Caco-2 (cell line): ENCODE measurements at regions of chr11 and their contacts with region 1.

Region 1: GRCh38 chr11:43130616-43131015 is 181.2 kb upstream of the API5 start:
- DNase-seq: peak; percentile 36 to 46
- H3K4me3 ChIP-seq: no peak overlapping the region
- H3K4me3 Mint-ChIP-seq: no peak overlapping the region
- H3K27ac Mint-ChIP-seq: no peak overlapping the region
- H3K4me1 ChIP-seq: peaks cover 10% of the 10 kb centered on the region
- H3K4me1 Mint-ChIP-seq: peaks cover 5% of the 10 kb centered on the region
- H3K27me3 ChIP-seq: no peaks in the 10 kb centered on the region
- H3K27me3 Mint-ChIP-seq: peaks cover 2% of the 10 kb centered on the region
- CTCF ChIP-seq: peak in 1 of 2 experiments; percentile 12

Region 2: DNA sequence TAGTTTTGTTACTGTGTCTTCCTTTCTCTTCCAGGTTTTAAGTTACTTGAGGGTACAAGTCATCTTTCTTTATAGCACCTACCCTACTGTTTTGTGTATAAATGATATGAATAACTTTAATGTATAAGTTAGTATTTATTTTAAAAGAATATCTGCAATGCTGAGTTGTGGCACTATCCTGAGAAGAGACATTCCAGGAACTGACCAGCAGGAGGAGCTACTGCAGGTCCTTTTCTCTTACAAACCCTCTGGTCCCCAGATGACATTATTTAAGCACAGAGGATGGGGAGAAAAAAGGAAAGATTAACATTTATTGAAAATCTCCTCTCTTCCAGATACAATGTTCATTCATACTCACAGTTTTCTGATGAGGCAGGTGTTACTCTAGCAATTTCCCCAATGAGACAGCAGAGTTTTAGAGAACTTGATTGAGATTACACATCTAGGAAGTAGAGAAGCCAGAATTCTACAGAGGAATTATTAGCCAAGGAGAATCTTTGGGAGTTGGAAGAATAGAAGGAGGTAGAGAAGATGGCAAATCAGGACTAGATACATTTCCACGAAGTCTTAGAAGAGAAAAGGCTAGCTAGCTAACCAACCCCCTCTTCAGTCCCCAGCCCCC is 360.1 kb before region 1 on chr11:
- CTCF ChIA-PET with region 1: interaction called, 13 read pairs
- POLR2A ChIA-PET with region 1: no interaction called
- intact Hi-C with region 1: loop called (anchors 1 kb)
- DNase-seq: peak in 1 of 2 experiments; percentile 31
- H3K4me3 ChIP-seq: no peak overlapping the region
- H3K4me3 Mint-ChIP-seq: no peak overlapping the region
- H3K27ac Mint-ChIP-seq: no peak overlapping the region
- H3K4me1 ChIP-seq: no peaks in the 10 kb centered on the region
- H3K4me1 Mint-ChIP-seq: no peaks in the 10 kb centered on the region
- H3K27me3 ChIP-seq: no peaks in the 10 kb centered on the region
- H3K27me3 Mint-ChIP-seq: peaks cover 6% of the 10 kb centered on the region
- CTCF ChIP-seq: peak; percentile 73 to 80

Region 3: DNA sequence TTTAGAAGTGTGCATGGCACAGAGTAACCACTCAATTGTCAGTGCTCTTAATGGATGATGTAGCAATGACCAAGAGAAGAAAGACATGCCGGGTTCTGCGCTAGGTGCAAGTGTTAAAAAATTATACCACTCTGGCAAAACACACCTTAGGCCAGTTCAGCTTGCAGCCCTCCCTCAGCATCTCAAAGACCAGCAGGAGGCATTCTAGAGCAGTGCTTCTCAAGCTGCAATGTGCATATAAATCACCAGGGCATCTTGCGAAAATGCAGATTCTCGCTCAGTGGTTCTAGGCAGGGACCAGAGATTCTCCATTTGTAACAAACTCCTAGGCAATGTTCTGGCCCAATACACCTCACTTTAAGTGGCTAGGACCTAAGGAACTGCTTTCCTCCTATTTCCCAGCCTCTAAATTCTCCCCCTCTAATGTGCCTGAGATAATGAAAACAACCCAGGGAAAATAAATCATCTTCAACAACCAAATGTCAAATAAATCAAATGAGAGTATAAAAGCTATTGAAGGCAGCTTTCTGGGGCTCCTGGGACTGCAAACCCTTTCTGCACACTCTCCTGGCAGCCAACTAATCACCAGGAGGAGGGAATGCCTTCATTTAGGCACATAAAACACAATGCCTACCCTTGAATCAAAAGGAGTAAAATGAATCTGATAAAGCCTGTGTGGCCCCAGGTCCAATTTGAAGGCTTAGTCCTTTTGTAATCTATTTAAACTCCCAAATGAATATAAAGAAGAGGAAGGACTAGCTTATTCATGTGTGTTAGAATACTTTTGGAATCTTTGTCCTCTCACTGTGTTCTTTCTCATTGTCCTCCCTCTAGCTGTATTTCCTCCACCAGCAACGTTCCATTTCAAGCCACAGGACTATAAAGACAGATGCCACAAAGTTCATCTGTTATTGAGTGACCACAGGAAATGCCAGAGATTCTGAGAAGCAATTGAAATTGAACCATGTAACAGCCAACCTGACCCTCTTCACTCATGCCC is 155.8 kb before region 1 on chr11:
- CTCF ChIA-PET with region 1: interaction called, 3 read pairs
- POLR2A ChIA-PET with region 1: no interaction called
- intact Hi-C with region 1: loop called (anchors 1 kb)
- DNase-seq: peak in 1 of 2 experiments; percentile 7
- H3K4me3 ChIP-seq: no peak overlapping the region
- H3K4me3 Mint-ChIP-seq: no peak overlapping the region
- H3K27ac Mint-ChIP-seq: no peak overlapping the region
- H3K4me1 ChIP-seq: no peaks in the 10 kb centered on the region
- H3K4me1 Mint-ChIP-seq: no peaks in the 10 kb centered on the region
- H3K27me3 ChIP-seq: no peaks in the 10 kb centered on the region
- H3K27me3 Mint-ChIP-seq: peaks cover 4% of the 10 kb centered on the region
- CTCF ChIP-seq: peak in 1 of 2 experiments; percentile 6

Region 4: DNA sequence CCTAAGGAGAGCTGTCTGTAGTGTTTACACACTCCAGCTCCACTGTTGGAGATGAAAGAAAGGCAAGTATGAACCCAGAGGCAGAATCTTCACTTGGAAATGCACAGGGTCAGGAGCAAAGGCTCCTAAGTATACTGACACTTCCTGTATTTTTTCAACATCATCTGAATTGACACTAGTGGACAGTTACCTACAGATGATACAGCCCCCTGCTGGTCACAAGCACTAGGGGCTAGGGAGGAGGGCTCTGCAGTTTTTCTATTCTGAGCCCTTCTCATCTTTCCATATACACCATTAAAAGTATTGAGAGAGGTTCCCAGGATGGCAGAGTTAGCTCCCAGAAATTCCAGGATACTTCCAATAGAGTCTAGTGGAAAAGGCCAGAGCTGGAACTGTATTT is 109.2 kb before region 1 on chr11:
- CTCF ChIA-PET with region 1: no interaction called
- POLR2A ChIA-PET with region 1: no interaction called
- intact Hi-C with region 1: loop called (anchors 1 kb)
- DNase-seq: peak; percentile 39 to 42
- H3K4me3 ChIP-seq: no peak overlapping the region
- H3K4me3 Mint-ChIP-seq: no peak overlapping the region
- H3K27ac Mint-ChIP-seq: no peak overlapping the region
- H3K4me1 ChIP-seq: no peaks in the 10 kb centered on the region
- H3K4me1 Mint-ChIP-seq: no peaks in the 10 kb centered on the region
- H3K27me3 ChIP-seq: no peaks in the 10 kb centered on the region
- H3K27me3 Mint-ChIP-seq: no peaks in the 10 kb centered on the region
- CTCF ChIP-seq: peak; percentile 59 to 62

Region 5: DNA sequence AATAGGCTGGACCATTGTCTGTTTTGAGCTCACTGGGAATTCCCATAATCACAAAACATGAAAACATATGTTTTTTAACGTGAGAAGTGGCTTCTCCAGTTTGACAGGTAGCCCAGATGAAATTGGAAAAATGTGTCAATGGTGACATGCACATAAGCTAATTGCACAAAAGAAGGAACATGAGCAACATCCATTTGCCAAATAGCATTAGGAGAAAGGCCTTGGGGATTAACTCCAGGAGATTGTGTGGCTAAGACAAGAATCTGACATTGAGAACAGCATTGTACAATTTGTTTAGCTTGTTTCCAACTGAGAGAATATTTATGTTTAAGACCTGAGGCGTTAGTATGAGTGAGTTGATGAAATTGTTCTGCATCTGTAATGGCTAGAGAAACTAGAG is 34.2 kb after region 1 on chr11:
- CTCF ChIA-PET with region 1: no interaction called
- POLR2A ChIA-PET with region 1: no interaction called
- intact Hi-C with region 1: no loop called
- DNase-seq: no peak
- H3K4me3 ChIP-seq: no peak overlapping the region
- H3K4me3 Mint-ChIP-seq: no peak overlapping the region
- H3K27ac Mint-ChIP-seq: no peak overlapping the region
- H3K4me1 ChIP-seq: no peaks in the 10 kb centered on the region
- H3K4me1 Mint-ChIP-seq: no peaks in the 10 kb centered on the region
- H3K27me3 ChIP-seq: no peaks in the 10 kb centered on the region
- H3K27me3 Mint-ChIP-seq: peaks cover 9% of the 10 kb centered on the region
- CTCF ChIP-seq: no peak